ENCODE measurements at regions of chr12 and their contacts with region 1.

Region 1: DNA sequence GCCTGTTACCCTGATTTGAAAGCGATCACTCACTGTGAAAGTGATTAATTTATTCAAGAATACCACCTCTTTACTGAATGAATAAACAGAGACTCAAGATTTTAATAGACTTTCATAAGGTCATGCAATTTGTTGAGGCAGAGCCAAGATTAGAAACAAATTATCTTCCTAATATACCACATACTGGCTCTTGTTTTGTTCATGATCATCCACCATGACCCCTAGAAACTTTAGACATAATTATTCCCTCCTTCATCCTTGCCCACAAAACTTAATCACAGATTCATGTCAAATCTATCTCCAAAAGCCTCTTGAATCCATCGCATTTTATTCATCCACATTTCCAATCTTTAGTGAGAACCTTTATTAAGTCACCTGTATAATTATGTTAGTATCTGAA is 152.3 kb downstream of the ATXN7L3B start:
- DNase-seq: no peak
- ATAC-seq: no peak
- H3K4me3 ChIP-seq: no peak overlapping the region
- H3K27ac ChIP-seq: no peak overlapping the region
- H3K4me1 ChIP-seq: no peaks in the 10 kb centered on the region
- H3K27me3 ChIP-seq: no peaks in the 10 kb centered on the region
- CTCF ChIP-seq: no peak
- POLR2A ChIP-seq: no peak

Region 2: GRCh38 chr12:74885775-74886174 is 195.8 kb after region 1 on chr12:
- intact Hi-C with region 1: no loop called
- DNase-seq: no peak
- ATAC-seq: no peak
- H3K4me3 ChIP-seq: no peak overlapping the region
- H3K27ac ChIP-seq: no peak overlapping the region
- H3K4me1 ChIP-seq: peaks cover 0 to 9% (median 0%) of the 10 kb centered on the region in 12 donors
- H3K27me3 ChIP-seq: no peaks in the 10 kb centered on the region
- CTCF ChIP-seq: no peak
- POLR2A ChIP-seq: no peak

Region 3: GRCh38 chr12:74957231-74957630 is 267.3 kb after region 1 on chr12:
- intact Hi-C with region 1: no loop called
- DNase-seq: no peak
- ATAC-seq: no peak
- H3K4me3 ChIP-seq: no peak overlapping the region
- H3K27ac ChIP-seq: no peak overlapping the region
- H3K4me1 ChIP-seq: no peaks in the 10 kb centered on the region
- H3K27me3 ChIP-seq: no peaks in the 10 kb centered on the region
- CTCF ChIP-seq: no peak
- POLR2A ChIP-seq: no peak

Region 4: GRCh38 chr12:75289753-75290152 is 599.8 kb after region 1 on chr12:
- intact Hi-C with region 1: loop called in 1 of 10 experiments (anchors 10 kb)
- DNase-seq: no peak
- ATAC-seq: no peak
- H3K4me3 ChIP-seq: no peak overlapping the region
- H3K27ac ChIP-seq: no peak overlapping the region
- H3K4me1 ChIP-seq: no peaks in the 10 kb centered on the region
- H3K27me3 ChIP-seq: no peaks in the 10 kb centered on the region
- CTCF ChIP-seq: peak in 3 of 12 donors; percentile 20 to 32 (median 20)
- POLR2A ChIP-seq: no peak

Region 5: GRCh38 chr12:75480469-75480949 is 790.6 kb after region 1 on chr12 and contains the start of gene GLIPR1:
- intact Hi-C with region 1: loop called in 2 of 10 experiments (anchors 5 to 10 kb)
- DNase-seq: peak; percentile 48 to 81 (median 71)
- ATAC-seq: peak; percentile 58 to 95 (median 91)
- H3K4me3 ChIP-seq: peak within 1 kb of the TSS; percentile 9 to 68 (median 45)
- H3K27ac ChIP-seq: peak within 1 kb of the TSS in 11 of 12 donors; percentile 2 to 98 (median 45)
- H3K4me1 ChIP-seq: peaks cover 0 to 69% (median 0%) of the 10 kb centered on the region in 12 donors
- H3K27me3 ChIP-seq: no peaks in the 10 kb centered on the region
- CTCF ChIP-seq: no peak
- POLR2A ChIP-seq: no peak
- total RNA-seq, gene GLIPR1: 3.2 to 58.6 (median 7.4) TPM

Region 6: GRCh38 chr12:75489613-75490210 is 799.8 kb after region 1 on chr12:
- intact Hi-C with region 1: loop called in 2 of 10 experiments (anchors 5 to 10 kb)
- DNase-seq: no peak
- ATAC-seq: no peak
- H3K4me3 ChIP-seq: no peak overlapping the region
- H3K27ac ChIP-seq: no peak overlapping the region
- H3K4me1 ChIP-seq: peaks cover 0 to 29% (median 0%) of the 10 kb centered on the region in 12 donors
- H3K27me3 ChIP-seq: no peaks in the 10 kb centered on the region
- CTCF ChIP-seq: no peak
- POLR2A ChIP-seq: no peak